AG04449 (cell line): ENCODE measurements at regions of chr17 and their contacts with region 1.

Region 1: GRCh38 chr17:82962864-82963684 is 116.3 kb upstream of the METRNL start:
- DNase-seq: no peak
- H3K4me3 ChIP-seq: 0 out of 2 replicates have a peak overlapping the region, but pooled peaks have one; percentile 8
- CTCF ChIP-seq: peak; percentile 94

Region 2: GRCh38 chr17:82952019-82952418 is 11.1 kb before region 1 on chr17:
- CTCF ChIA-PET with region 1: interaction called, 16 read pairs
- POLR2A ChIA-PET with region 1: no interaction called
- DNase-seq: no peak
- H3K4me3 ChIP-seq: no peak overlapping the region
- CTCF ChIP-seq: no peak

Region 3: GRCh38 chr17:83133302-83134100 is 170.4 kb after region 1 on chr17:
- CTCF ChIA-PET with region 1: no interaction called
- POLR2A ChIA-PET with region 1: no interaction called
- DNase-seq: no peak
- H3K4me3 ChIP-seq: no peak overlapping the region
- CTCF ChIP-seq: no peak